ENCODE measurements at regions of chr2 and their contacts with region 1.

Region 1: GRCh38 chr2:10812362-10813162 is at the start of gene PDIA6:
- DNase-seq: peak; percentile 96
- H3K4me3 Mint-ChIP-seq: peak within 1 kb of the TSS; percentile 85
- H3K27ac Mint-ChIP-seq: peak within 1 kb of the TSS; percentile 85
- H3K4me1 Mint-ChIP-seq: peaks cover 34% of the 10 kb centered on the region
- H3K27me3 Mint-ChIP-seq: no peaks in the 10 kb centered on the region
- total RNA-seq, gene PDIA6: 103 to 106 TPM

Region 2: DNA sequence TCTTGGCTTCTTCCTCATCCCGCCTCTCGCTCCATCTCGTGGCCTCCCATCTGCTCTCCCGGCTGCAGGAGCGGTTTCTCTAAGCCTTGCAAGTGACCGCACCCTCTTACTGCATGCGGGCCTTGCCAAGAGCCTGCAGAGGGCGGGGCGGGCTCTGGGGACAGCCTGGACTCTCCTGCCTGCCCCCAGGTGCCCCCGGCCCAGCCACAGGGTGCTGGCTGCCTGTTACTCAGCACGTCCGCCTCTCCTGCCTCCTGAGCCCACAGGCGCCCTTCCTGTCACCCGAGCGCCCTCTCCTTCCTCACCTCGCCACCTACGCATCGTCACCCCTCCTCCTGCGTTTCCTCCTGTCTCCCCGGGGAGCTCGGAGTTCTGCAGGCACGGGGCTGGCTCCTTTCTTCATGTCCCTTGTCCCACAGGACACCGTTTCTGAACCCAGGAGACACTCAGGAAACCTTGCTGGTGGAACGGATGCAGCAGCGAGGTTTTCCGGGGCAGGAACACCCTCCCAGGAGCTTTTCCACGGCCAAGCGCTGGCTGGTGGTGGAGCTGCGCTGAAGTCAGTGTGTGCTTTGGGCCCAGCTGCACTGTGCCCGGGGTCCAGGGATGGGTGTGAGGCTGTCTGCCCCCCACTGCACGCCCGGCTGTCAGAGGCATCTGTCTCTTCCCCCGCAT is 481.4 kb before region 1 on chr2:
- CTCF ChIA-PET with region 1: no interaction called
- intact Hi-C with region 1: loop called (anchors 5 kb)
- DNase-seq: peak; percentile 92
- H3K4me3 Mint-ChIP-seq: peak overlapping the region; percentile 86
- H3K27ac Mint-ChIP-seq: peak overlapping the region; percentile 91
- H3K4me1 Mint-ChIP-seq: peaks cover 77% of the 10 kb centered on the region
- H3K27me3 Mint-ChIP-seq: no peaks in the 10 kb centered on the region

Region 3: DNA sequence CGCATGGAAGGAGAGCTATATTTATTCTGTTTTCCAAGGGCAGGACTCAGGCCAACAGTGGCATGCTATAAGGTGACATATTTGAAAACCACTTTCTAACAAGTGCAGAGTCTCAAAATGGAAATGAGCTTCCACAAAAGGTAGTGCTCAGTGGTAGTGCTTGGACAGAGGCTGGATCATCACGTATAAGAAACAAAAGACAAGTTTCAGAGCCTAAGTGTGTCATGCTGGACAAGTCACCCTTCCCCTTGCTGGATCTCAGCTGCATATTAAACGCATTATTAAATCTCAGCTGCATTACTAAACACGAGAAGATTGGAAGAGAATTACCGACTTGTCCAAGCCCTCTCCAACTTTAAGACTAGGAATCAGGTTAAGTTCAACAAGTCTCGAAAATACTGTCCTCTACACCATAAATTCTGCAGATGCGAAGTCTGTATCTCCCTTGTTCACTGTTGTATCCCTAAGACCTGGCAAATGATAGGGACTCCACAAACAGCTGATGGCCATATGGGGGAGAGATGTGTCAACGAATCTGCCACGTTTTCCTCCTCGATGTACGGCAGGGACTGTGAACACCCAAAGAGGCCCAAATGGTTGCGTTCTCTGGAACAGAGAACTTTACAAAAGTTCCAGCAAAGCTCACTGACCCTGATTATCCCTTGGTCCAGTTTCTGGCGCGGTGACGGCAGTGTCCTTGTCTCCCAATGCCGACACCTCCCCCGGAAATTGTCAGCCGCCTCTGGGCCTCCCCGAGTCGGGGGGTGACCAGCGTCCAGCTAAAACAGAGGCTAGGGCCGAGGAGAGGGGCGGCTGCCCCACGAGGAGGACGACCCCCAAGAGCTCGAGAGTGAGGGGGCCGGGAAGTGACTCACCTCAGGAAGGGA is 123.4 kb before region 1 on chr2:
- CTCF ChIA-PET with region 1: no interaction called
- intact Hi-C with region 1: loop called (anchors 5 kb)
- DNase-seq: peak; percentile 28
- H3K4me3 Mint-ChIP-seq: no peak overlapping the region
- H3K27ac Mint-ChIP-seq: no peak overlapping the region
- H3K4me1 Mint-ChIP-seq: peaks cover 8% of the 10 kb centered on the region
- H3K27me3 Mint-ChIP-seq: no peaks in the 10 kb centered on the region

Region 4: DNA sequence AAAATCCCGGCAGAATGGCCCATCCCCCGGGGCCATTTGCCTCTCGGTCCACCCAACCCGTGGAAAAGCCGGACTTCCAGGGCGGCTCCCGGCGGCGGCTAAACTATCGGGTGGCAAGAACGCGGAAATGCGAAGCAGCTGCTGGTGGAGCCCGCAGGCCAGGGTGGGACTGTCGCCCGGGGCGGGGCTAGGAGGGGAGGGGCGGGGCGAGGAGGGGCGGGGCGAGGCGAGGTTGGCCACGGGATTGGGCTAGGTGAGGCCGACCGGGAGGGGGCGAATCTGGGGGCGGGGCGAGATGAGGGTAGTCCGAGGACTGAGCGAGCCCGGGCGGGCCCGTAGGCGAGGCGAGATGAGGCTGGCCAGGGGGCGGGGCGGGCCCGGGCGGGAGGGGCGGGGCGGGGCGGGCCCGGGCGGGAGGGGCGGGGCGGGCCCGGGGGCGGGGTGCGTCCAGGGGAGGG is 342.4 kb after region 1 on chr2:
- CTCF ChIA-PET with region 1: no interaction called
- intact Hi-C with region 1: loop called (anchors 1 kb)
- DNase-seq: peak; percentile 99
- H3K4me3 Mint-ChIP-seq: peak overlapping the region; percentile 76
- H3K27ac Mint-ChIP-seq: peak overlapping the region; percentile 61
- H3K4me1 Mint-ChIP-seq: peaks cover 9% of the 10 kb centered on the region
- H3K27me3 Mint-ChIP-seq: no peaks in the 10 kb centered on the region

Region 5: GRCh38 chr2:11344342-11344955 is 531.9 kb after region 1 on chr2 and contains the start of gene ROCK2:
- CTCF ChIA-PET with region 1: no interaction called
- intact Hi-C with region 1: loop called (anchors 5 kb)
- DNase-seq: peak; percentile 72
- H3K4me3 Mint-ChIP-seq: peak within 1 kb of the TSS; percentile 99
- H3K27ac Mint-ChIP-seq: peak within 1 kb of the TSS; percentile 85
- H3K4me1 Mint-ChIP-seq: peaks cover 29% of the 10 kb centered on the region
- H3K27me3 Mint-ChIP-seq: no peaks in the 10 kb centered on the region
- total RNA-seq, gene ROCK2: 8.4 to 9.4 TPM

Region 6: GRCh38 chr2:11465497-11466406 is 653.2 kb after region 1 on chr2 and contains the start of gene E2F6:
- CTCF ChIA-PET with region 1: no interaction called
- intact Hi-C with region 1: loop called (anchors 2 kb)
- DNase-seq: peak; percentile 89
- H3K4me3 Mint-ChIP-seq: peak within 1 kb of the TSS; percentile 91
- H3K27ac Mint-ChIP-seq: peak within 1 kb of the TSS; percentile 83
- H3K4me1 Mint-ChIP-seq: peaks cover 40% of the 10 kb centered on the region
- H3K27me3 Mint-ChIP-seq: no peaks in the 10 kb centered on the region
- total RNA-seq, gene E2F6: 8.7 to 9.4 TPM

Region 7: GRCh38 chr2:11743846-11744553 is 931.4 kb after region 1 on chr2:
- CTCF ChIA-PET with region 1: no interaction called
- intact Hi-C with region 1: loop called (anchors 5 kb)
- DNase-seq: peak; percentile 92
- H3K4me3 Mint-ChIP-seq: no peak overlapping the region
- H3K27ac Mint-ChIP-seq: peak overlapping the region; percentile 69
- H3K4me1 Mint-ChIP-seq: peaks cover 47% of the 10 kb centered on the region
- H3K27me3 Mint-ChIP-seq: no peaks in the 10 kb centered on the region